ENCODE measurements at regions of chr18 and their contacts with region 1.

Region 1: DNA sequence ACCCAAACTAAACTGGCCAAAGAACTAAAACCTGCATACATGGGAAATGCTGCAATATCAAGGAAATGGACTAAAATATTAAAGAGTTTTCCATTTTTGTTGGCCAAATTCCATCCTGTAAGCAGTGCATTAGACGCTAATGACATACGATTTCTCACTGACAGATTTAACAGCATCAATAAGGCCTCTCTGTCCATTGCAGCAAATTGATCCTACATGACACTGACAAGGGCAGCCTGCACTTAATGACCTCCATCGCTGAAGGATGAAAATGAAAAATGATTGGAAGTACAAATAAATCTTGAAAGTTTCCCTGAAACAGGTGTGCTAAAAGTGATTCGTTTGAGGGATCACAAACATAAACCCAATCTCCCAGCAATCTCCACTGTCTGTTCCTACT is 317.6 kb upstream of the KLHL14 start:
- DNase-seq: no peak
- H3K4me3 Mint-ChIP-seq: no peak overlapping the region
- H3K27ac Mint-ChIP-seq: no peak overlapping the region
- H3K4me1 Mint-ChIP-seq: no peaks in the 10 kb centered on the region
- H3K27me3 Mint-ChIP-seq: no peaks in the 10 kb centered on the region
- CTCF ChIP-seq: no peak

Region 2: DNA sequence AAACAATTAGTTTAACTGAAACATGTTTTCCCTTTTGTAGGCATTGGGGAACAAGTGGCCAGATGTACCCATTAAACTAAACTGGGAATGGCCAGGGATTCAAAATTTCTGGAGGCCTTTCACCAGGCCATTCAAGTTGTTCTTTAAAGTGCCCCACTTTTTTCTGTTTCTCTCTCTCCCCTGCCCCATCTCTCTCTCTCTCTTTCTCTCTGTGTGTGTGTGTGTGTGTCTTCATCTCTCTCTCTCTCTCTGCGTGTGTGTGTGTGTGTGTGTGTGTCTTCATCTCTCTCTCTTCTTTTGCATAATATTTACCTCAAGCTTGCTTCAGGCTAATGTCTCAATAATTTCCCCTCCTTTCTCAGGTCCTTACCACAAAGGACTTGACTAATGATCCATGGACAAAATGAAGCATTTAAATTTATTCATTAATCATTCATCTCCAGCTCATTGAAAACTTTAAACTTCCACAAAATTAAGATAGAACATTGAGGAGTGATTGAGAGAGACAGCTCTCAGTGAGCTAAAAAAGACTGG is 153.4 kb before region 1 on chr18:
- CTCF ChIA-PET with region 1: interaction called, 11 read pairs
- intact Hi-C with region 1: no loop called
- DNase-seq: no peak
- H3K4me3 Mint-ChIP-seq: no peak overlapping the region
- H3K27ac Mint-ChIP-seq: no peak overlapping the region
- H3K4me1 Mint-ChIP-seq: no peaks in the 10 kb centered on the region
- H3K27me3 Mint-ChIP-seq: no peaks in the 10 kb centered on the region
- CTCF ChIP-seq: no peak

Measured in Calu3 (cell line).